CD4-positive, alpha-beta T cell (primary cell): ENCODE measurements at regions of chr16 and their contacts with region 1.

Region 1: GRCh38 chr16:30091474-30092372 is at the start of gene TBX6:
- DNase-seq: peak; percentile 85 to 96 (median 91)
- ATAC-seq: peak; percentile 80
- H3K4me3 ChIP-seq: peak within 1 kb of the TSS; percentile 67
- H3K4me3 Mint-ChIP-seq: peak within 1 kb of the TSS; percentile 88
- H3K27ac ChIP-seq: peak within 1 kb of the TSS; percentile 58 to 81
- H3K27ac Mint-ChIP-seq: peak within 1 kb of the TSS; percentile 95
- H3K4me1 ChIP-seq: peaks cover 72% of the 10 kb centered on the region
- H3K4me1 Mint-ChIP-seq: peaks cover 53% of the 10 kb centered on the region
- H3K27me3 ChIP-seq: no peaks in the 10 kb centered on the region
- H3K27me3 Mint-ChIP-seq: no peaks in the 10 kb centered on the region
- CTCF ChIP-seq: peak; percentile 78
- total RNA-seq, gene TBX6: 0.42 to 0.47 TPM

Region 2: DNA sequence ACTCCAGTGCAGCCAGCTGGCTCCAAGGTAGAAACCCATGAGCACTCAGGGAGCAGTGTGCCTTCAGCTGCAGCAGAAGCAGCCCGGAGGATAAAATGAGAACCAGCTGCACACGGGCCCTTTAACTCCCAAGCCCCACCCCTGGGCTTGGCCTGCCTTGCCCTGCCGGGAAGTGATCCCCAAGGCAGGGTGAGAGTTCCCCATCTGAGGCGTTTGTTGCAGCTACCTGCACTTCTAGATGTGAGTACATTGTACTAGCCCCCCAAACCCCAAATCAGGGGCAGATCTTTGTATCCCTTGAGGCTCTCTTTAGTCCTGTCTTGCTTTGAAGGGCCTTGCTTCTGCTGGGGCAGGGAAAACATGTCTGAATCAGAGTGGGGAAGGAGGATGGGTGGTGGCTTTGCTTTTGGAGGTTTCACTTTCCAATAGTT is 271.4 kb before region 1 on chr16 and contains the start of gene MVP:
- CTCF ChIA-PET with region 1: no interaction called
- POLR2A ChIA-PET with region 1: no interaction called
- intact Hi-C with region 1: no loop called
- DNase-seq: peak in 11 of 14 experiments; percentile 30 to 67 (median 55)
- ATAC-seq: no peak
- H3K4me3 ChIP-seq: peak within 1 kb of the TSS; percentile 94
- H3K4me3 Mint-ChIP-seq: peak within 1 kb of the TSS; percentile 98
- H3K27ac ChIP-seq: peak within 1 kb of the TSS; percentile 75 to 83
- H3K27ac Mint-ChIP-seq: peak within 1 kb of the TSS; percentile 83
- H3K4me1 ChIP-seq: peaks cover 93% of the 10 kb centered on the region
- H3K4me1 Mint-ChIP-seq: peaks cover 83% of the 10 kb centered on the region
- H3K27me3 ChIP-seq: no peaks in the 10 kb centered on the region
- H3K27me3 Mint-ChIP-seq: no peaks in the 10 kb centered on the region
- CTCF ChIP-seq: no peak
- total RNA-seq, gene MVP: 115 to 118 TPM

Region 3: DNA sequence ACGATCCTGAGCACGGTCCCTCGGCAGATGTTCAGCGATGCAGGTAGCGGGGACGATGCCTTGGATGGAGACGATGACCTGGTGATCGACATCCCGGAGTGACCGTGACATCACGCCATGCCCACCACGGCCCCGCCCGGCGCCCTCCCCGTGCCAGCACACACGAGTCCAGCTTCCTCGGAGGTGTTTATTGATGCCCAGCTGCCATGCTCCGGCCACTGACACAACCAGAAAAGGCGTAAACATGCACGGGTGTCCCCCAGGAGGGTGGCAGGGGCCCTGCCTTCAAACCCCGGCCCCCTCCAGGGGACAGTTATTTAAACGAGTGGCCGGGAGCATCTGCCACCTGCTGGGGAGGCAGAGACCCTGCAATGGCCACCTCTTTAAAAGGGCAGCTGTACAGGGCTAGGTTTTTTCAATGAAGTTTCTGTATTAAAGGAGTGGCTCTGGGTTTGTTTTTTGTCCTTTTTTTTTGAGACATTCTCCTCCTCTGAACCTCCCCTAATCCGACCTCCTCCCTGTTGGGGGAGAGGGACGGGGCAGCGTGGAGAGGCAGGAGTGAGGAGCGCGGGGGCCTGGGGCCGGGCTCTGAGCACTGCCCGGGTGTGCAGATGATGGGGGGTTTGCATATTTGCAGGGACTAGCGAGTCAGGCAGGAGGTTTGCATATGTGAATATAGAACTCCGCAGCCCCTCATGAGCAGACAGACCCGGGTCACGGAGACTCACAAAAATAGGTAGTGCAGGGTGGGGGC is 86.2 kb before region 1 on chr16:
- CTCF ChIA-PET with region 1: no interaction called
- POLR2A ChIA-PET with region 1: no interaction called
- intact Hi-C with region 1: no loop called
- DNase-seq: peak in 11 of 14 experiments; percentile 27 to 71 (median 36)
- ATAC-seq: peak; percentile 89
- H3K4me3 ChIP-seq: no peak overlapping the region
- H3K4me3 Mint-ChIP-seq: no peak overlapping the region
- H3K27ac ChIP-seq: no peak overlapping the region
- H3K27ac Mint-ChIP-seq: no peak overlapping the region
- H3K4me1 ChIP-seq: peaks cover 18% of the 10 kb centered on the region
- H3K4me1 Mint-ChIP-seq: peaks cover 15% of the 10 kb centered on the region
- H3K27me3 ChIP-seq: peaks cover 8 to 10% of the 10 kb centered on the region in 2 experiments
- H3K27me3 Mint-ChIP-seq: peaks cover 13% of the 10 kb centered on the region
- CTCF ChIP-seq: peak; percentile 65

Region 4: GRCh38 chr16:30018731-30019158 is 73.0 kb before region 1 on chr16:
- CTCF ChIA-PET with region 1: no interaction called
- POLR2A ChIA-PET with region 1: no interaction called
- intact Hi-C with region 1: no loop called
- DNase-seq: no peak
- ATAC-seq: no peak
- H3K4me3 ChIP-seq: no peak overlapping the region
- H3K4me3 Mint-ChIP-seq: peak overlapping the region; percentile 27
- H3K27ac ChIP-seq: no peak overlapping the region
- H3K27ac Mint-ChIP-seq: no peak overlapping the region
- H3K4me1 ChIP-seq: peaks cover 13% of the 10 kb centered on the region
- H3K4me1 Mint-ChIP-seq: peaks cover 12% of the 10 kb centered on the region
- H3K27me3 ChIP-seq: no peaks in the 10 kb centered on the region
- H3K27me3 Mint-ChIP-seq: peaks cover 4% of the 10 kb centered on the region
- CTCF ChIP-seq: no peak

Region 5: GRCh38 chr16:30075507-30076275 is 16.0 kb before region 1 on chr16 and contains the start of gene PPP4C:
- CTCF ChIA-PET with region 1: interaction called, 24 read pairs
- POLR2A ChIA-PET with region 1: interaction called, 25 read pairs
- intact Hi-C with region 1: loop called (anchors 2 kb)
- DNase-seq: peak; percentile 79 to 96 (median 86)
- ATAC-seq: peak; percentile 87
- H3K4me3 ChIP-seq: peak within 1 kb of the TSS; percentile 98
- H3K4me3 Mint-ChIP-seq: peak within 1 kb of the TSS; percentile 98
- H3K27ac ChIP-seq: peak within 1 kb of the TSS; percentile 77 to 80
- H3K27ac Mint-ChIP-seq: peak within 1 kb of the TSS; percentile 96
- H3K4me1 ChIP-seq: peaks cover 38% of the 10 kb centered on the region
- H3K4me1 Mint-ChIP-seq: peaks cover 39% of the 10 kb centered on the region
- H3K27me3 ChIP-seq: no peaks in the 10 kb centered on the region
- H3K27me3 Mint-ChIP-seq: no peaks in the 10 kb centered on the region
- CTCF ChIP-seq: no peak
- total RNA-seq, gene PPP4C: 83.9 to 87.3 TPM

Region 6: DNA sequence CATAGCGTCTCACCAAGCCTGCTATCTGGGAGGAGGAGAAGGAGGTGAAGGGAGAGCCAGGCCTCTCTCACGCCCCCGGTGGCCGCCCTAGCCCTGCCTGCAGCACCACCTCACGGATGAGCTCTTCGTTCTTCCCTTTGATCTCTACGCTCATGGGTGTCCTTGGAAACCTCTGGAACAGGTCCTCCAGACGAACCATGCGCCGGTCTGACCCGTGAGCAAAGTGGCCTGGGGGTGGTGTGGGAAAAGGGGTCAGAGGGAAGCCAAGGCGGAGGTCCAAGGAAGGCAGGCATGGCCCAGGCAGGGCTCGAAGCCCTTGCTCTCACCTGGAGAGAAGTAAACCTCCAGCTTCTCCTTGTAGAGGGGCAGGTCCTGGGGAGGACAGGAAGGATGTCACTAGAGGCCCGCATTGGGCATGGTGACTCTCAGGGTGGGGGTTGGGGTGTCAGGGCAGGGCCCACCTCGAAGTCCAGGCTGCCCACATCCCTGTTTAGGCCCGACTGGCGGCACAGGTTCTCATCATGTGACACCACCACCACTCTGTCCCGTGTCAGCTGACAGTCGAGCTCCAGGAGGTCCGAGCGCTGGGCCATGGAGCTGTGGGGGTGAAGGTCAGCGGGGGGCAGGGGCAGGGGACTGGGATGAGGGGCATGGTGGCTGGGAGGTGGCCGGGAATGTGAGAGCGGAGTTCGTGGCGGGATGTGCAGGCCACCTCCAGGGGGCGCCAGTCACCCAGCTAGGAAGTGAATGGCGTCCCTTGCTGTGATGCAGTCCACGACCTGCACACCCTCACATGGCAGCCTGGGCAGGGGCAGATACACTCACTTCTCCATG is 20.7 kb after region 1 on chr16:
- CTCF ChIA-PET with region 1: interaction called, 18 read pairs
- POLR2A ChIA-PET with region 1: interaction called, 5 read pairs
- intact Hi-C with region 1: no loop called
- DNase-seq: peak in 12 of 14 experiments; percentile 35 to 77 (median 52)
- ATAC-seq: peak; percentile 52
- H3K4me3 ChIP-seq: no peak overlapping the region
- H3K4me3 Mint-ChIP-seq: no peak overlapping the region
- H3K27ac ChIP-seq: no peak overlapping the region
- H3K27ac Mint-ChIP-seq: no peak overlapping the region
- H3K4me1 ChIP-seq: peaks cover 40% of the 10 kb centered on the region
- H3K4me1 Mint-ChIP-seq: peaks cover 4% of the 10 kb centered on the region
- H3K27me3 ChIP-seq: no peaks in the 10 kb centered on the region
- H3K27me3 Mint-ChIP-seq: no peaks in the 10 kb centered on the region
- CTCF ChIP-seq: peak; percentile 71

Region 7: GRCh38 chr16:30122604-30123160 is 31.0 kb after region 1 on chr16:
- CTCF ChIA-PET with region 1: interaction called, 6 read pairs
- POLR2A ChIA-PET with region 1: interaction called, 5 read pairs
- intact Hi-C with region 1: loop called in 1 of 2 experiments (anchors 2 kb)
- DNase-seq: peak in 5 of 14 experiments; percentile 4 to 39 (median 26)
- ATAC-seq: peak; percentile 16
- H3K4me3 ChIP-seq: peak overlapping the region; percentile 92
- H3K4me3 Mint-ChIP-seq: peak overlapping the region; percentile 91
- H3K27ac ChIP-seq: peak overlapping the region; percentile 37 to 59
- H3K27ac Mint-ChIP-seq: peak overlapping the region; percentile 81
- H3K4me1 ChIP-seq: peaks cover 33% of the 10 kb centered on the region
- H3K4me1 Mint-ChIP-seq: peaks cover 28% of the 10 kb centered on the region
- H3K27me3 ChIP-seq: no peaks in the 10 kb centered on the region
- H3K27me3 Mint-ChIP-seq: no peaks in the 10 kb centered on the region
- CTCF ChIP-seq: no peak

Region 8: DNA sequence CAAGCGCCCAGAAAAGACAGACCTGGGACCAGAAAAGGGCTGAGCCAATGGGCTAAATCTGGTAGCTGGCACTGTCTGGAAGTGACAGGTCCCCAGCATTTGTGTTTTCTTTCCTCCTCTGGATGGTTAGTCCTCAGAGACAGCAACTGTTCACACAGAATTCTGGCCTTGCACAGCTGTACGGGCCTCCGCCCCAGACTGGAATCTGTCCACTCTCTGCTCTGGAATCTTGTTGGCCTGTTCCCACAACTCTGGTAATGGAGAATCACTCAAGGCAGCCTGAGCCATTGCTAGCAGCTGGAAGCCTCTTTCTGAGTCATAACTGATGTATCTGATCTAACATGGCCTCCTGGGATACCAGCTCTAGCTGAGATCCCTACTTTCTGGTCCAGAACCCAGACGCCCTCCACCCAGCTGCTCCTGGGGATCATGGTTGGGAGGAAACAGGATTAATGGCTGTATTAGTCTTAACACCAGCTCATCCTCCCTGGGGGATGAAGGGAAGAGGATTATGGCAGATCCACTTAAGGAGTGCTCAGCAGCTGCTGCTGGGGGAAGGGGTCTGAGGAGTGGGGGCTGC is 973.2 kb after region 1 on chr16:
- CTCF ChIA-PET with region 1: no interaction called
- POLR2A ChIA-PET with region 1: no interaction called
- intact Hi-C with region 1: no loop called
- DNase-seq: no peak
- ATAC-seq: no peak
- H3K4me3 ChIP-seq: no peak overlapping the region
- H3K4me3 Mint-ChIP-seq: peak overlapping the region; percentile 58
- H3K27ac ChIP-seq: peak overlapping the region in 1 of 2 donors; percentile 2
- H3K27ac Mint-ChIP-seq: peak overlapping the region; percentile 72
- H3K4me1 ChIP-seq: peaks cover 53% of the 10 kb centered on the region
- H3K4me1 Mint-ChIP-seq: peaks cover 46% of the 10 kb centered on the region
- H3K27me3 ChIP-seq: no peaks in the 10 kb centered on the region
- H3K27me3 Mint-ChIP-seq: no peaks in the 10 kb centered on the region
- CTCF ChIP-seq: no peak